CD4-positive, alpha-beta memory T cell (primary cell): ENCODE measurements at regions of chr7 and their contacts with region 1.

Region 1: GRCh38 chr7:99910976-99911375 is 8.4 kb downstream of the TRIM4 start:
- DNase-seq: no peak
- H3K4me3 ChIP-seq: no peak overlapping the region
- H3K4me3 Mint-ChIP-seq: peak overlapping the region in 1 of 8 donors; percentile 54
- H3K27ac ChIP-seq: no peak overlapping the region
- H3K27ac Mint-ChIP-seq: peak overlapping the region in 2 of 7 donors; percentile 42 to 68
- H3K4me1 ChIP-seq: peaks cover 25% of the 10 kb centered on the region
- H3K4me1 Mint-ChIP-seq: peaks cover 33 to 65% (median 51%) of the 10 kb centered on the region in 4 donors
- H3K27me3 ChIP-seq: no peaks in the 10 kb centered on the region
- H3K27me3 Mint-ChIP-seq: no peaks in the 10 kb centered on the region

Region 2: GRCh38 chr7:99949638-99950228 is 38.8 kb after region 1 on chr7:
- CTCF ChIA-PET with region 1: interaction called, 26 read pairs
- POLR2A ChIA-PET with region 1: no interaction called
- intact Hi-C with region 1: loop called (anchors 1 kb)
- DNase-seq: peak in 3 of 5 donors; percentile 8 to 16 (median 14)
- H3K4me3 ChIP-seq: no peak overlapping the region
- H3K4me3 Mint-ChIP-seq: no peak overlapping the region
- H3K27ac ChIP-seq: no peak overlapping the region
- H3K27ac Mint-ChIP-seq: no peak overlapping the region
- H3K4me1 ChIP-seq: no peaks in the 10 kb centered on the region
- H3K4me1 Mint-ChIP-seq: no peaks in the 10 kb centered on the region
- H3K27me3 ChIP-seq: no peaks in the 10 kb centered on the region
- H3K27me3 Mint-ChIP-seq: peaks cover 10 to 15% of the 10 kb centered on the region in 2 donors

Region 3: DNA sequence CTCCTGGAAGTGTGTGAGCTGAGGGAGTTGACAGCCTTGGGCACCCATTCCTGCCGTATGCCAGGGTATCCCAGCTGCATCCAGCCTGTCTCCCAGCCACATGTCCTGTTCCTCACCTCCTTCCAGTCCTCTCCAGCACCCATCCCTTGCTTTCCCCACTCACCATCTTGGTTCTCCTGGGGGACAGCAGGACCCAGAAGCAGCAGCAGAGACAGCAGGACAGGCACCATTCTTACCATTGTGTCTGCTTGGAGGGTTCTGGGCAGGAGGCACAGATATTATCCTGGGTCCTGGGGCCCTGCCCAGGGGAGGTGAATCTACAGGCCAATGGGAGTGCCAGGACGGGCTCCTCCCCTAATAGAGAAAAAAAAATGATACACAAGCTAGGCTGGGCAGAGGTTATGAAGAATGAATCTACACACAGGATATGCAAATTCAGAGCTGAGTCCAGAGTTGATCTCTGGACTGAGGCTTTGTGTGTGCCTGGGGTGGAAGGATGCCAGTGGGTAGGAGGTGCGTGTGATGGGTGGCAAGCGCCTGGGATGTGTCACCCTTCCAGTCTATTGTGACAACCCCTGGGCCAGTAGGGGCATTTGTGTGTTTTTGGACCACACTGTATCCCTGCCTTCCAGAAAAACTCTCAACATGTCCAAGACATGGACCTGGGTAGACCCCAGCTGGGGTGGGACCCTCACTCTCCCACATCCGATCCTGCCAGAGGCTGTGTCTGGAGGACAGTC is 65.0 kb after region 1 on chr7 and contains the start of gene AZGP1:
- CTCF ChIA-PET with region 1: interaction called, 17 read pairs
- POLR2A ChIA-PET with region 1: no interaction called
- intact Hi-C with region 1: loop called (anchors 1 kb)
- DNase-seq: no peak
- H3K4me3 ChIP-seq: no peak within 1 kb of the TSS
- H3K4me3 Mint-ChIP-seq: no peak within 1 kb of the TSS
- H3K27ac ChIP-seq: no peak within 1 kb of the TSS
- H3K27ac Mint-ChIP-seq: no peak within 1 kb of the TSS
- H3K4me1 ChIP-seq: no peaks in the 10 kb centered on the region
- H3K4me1 Mint-ChIP-seq: peaks cover 0 to 2% (median 0%) of the 10 kb centered on the region in 4 donors
- H3K27me3 ChIP-seq: no peaks in the 10 kb centered on the region
- H3K27me3 Mint-ChIP-seq: peaks cover 9 to 16% of the 10 kb centered on the region in 2 donors
- total RNA-seq, gene AZGP1: not detected

Region 4: DNA sequence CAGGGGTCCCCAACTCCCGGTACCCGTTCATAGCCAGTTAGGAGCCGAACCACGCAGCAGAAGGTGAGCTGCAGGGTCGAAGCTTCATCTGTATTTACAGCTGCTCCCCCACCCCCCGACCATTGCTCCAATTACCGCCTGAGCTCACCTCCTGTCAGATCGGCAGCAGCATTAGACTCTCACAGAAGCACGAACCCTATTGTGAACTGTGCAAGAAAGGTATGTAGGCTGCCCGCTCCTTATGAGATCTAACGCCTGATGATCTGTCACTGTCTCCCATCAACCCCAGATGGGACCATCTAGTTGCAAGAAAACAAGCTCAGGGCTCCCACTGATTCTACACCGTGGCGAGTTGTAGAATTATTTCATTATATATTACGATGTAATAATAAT is 79.5 kb after region 1 on chr7:
- CTCF ChIA-PET with region 1: interaction called, 268 read pairs
- POLR2A ChIA-PET with region 1: interaction called, 3 read pairs
- intact Hi-C with region 1: loop called (anchors 1 kb)
- DNase-seq: peak in 1 of 5 donors; percentile 2
- H3K4me3 ChIP-seq: no peak overlapping the region
- H3K4me3 Mint-ChIP-seq: no peak overlapping the region
- H3K27ac ChIP-seq: no peak overlapping the region
- H3K27ac Mint-ChIP-seq: no peak overlapping the region
- H3K4me1 ChIP-seq: peaks cover 3% of the 10 kb centered on the region
- H3K4me1 Mint-ChIP-seq: peaks cover 0 to 6% (median 4%) of the 10 kb centered on the region in 4 donors
- H3K27me3 ChIP-seq: no peaks in the 10 kb centered on the region
- H3K27me3 Mint-ChIP-seq: peaks cover 2 to 5% of the 10 kb centered on the region in 2 donors